ENCODE measurements at regions of chr4 and their contacts with region 1.

Region 1: GRCh38 chr4:185005216-185005819 is 13.0 kb upstream of the HELT start:
- DNase-seq: peak; percentile 83
- CTCF ChIP-seq: peak; percentile 90

Region 2: DNA sequence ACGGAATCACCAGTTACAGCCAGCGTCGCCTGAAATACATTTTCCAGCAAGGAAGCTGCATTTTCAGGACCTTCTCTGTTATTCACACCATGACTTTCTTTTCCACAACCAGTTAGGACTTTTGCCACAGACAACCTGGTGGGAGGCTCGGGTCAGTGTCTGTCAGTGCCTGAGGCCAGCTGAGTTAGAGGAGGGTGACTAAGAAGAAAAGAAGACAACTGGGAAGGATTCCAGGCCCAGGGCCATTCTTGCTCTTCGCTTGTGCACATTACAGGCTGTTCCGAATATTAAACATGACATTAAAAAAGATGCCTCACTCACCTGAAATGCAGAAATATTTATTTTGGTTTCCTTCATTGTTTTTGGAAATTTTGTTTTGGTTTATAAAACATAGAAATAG is 250.0 kb before region 1 on chr4:
- in situ Hi-C with region 1: loop called (anchors 5 kb)
- DNase-seq: no peak
- CTCF ChIP-seq: no peak

Measured in GM13977 (cell line).